ENCODE measurements at regions of chr4 and their contacts with region 1.

Region 1: DNA sequence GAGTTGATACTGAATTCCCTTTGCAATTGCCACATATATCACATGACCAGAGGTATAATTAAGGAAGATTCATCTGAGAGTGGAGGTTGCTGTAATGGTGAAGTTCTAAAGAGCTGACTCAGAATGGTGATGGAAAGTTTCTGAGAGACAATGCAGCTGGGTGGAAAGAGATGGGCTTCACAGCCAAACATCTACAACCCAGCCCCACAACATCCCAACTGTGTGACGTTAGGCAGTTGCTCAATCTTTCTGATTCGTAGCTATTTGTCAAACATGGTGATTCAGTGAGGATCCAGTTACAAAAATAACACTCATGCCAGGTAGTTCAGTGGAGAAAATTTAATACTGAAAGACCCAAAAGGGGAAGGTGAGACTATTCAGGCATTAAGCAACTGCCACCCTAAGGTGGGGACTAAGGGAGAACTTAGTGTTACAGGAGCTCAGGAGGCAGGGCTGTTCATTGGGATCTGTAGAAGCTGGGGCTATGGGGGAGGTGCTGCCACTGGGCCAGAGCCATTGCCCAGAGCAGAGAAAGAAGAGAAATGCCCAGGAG is 6.9 kb upstream of the AFF1 start:
- DNase-seq: no peak
- ATAC-seq: no peak
- H3K4me3 ChIP-seq: no peak overlapping the region
- H3K4me3 Mint-ChIP-seq: no peak overlapping the region
- H3K27ac ChIP-seq: no peak overlapping the region
- H3K27ac Mint-ChIP-seq: no peak overlapping the region
- H3K4me1 ChIP-seq: no peaks in the 10 kb centered on the region
- H3K4me1 Mint-ChIP-seq: peaks cover 0 to 11% (median 0%) of the 10 kb centered on the region in 3 donors
- H3K27me3 ChIP-seq: no peaks in the 10 kb centered on the region
- H3K27me3 Mint-ChIP-seq: no peaks in the 10 kb centered on the region

Region 2: GRCh38 chr4:86816501-86817273 is 111.2 kb before region 1 on chr4:
- CTCF ChIA-PET with region 1: no interaction called
- POLR2A ChIA-PET with region 1: no interaction called
- DNase-seq: no peak
- ATAC-seq: no peak
- H3K4me3 ChIP-seq: no peak overlapping the region
- H3K4me3 Mint-ChIP-seq: no peak overlapping the region
- H3K27ac ChIP-seq: no peak overlapping the region
- H3K27ac Mint-ChIP-seq: no peak overlapping the region
- H3K4me1 ChIP-seq: no peaks in the 10 kb centered on the region
- H3K4me1 Mint-ChIP-seq: no peaks in the 10 kb centered on the region
- H3K27me3 ChIP-seq: no peaks in the 10 kb centered on the region
- H3K27me3 Mint-ChIP-seq: no peaks in the 10 kb centered on the region

Region 3: DNA sequence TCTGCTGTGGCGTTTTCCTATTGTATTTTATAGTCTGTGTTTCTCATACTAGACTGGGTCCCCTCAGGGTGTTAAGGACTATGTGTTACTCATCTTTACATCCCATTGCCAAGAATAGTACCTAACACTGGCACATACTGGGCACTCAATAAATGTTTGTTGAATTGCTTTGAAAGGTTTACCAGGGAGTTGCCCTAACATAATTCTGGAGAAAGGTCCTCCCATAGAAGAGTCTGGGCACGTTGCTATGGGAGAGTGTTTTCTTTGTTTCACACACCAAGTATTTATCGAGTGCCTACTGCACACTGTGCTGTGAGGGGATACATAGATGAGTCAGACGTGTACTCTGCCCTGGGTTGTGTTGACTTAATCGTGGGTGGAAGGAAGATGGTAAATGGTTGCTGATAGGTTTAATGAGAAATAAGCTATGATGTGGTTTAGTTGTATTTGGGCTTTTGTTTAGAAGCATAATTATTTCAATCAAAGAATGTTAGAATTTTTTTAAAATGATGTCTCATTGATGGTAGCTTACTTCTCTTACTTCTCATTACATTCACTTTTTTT is 49.8 kb after region 1 on chr4:
- CTCF ChIA-PET with region 1: interaction called in 1 of 2 experiments, 10 read pairs
- POLR2A ChIA-PET with region 1: no interaction called
- DNase-seq: no peak
- ATAC-seq: peak in 3 of 4 experiments; percentile 31 to 67 (median 43)
- H3K4me3 ChIP-seq: no peak overlapping the region
- H3K4me3 Mint-ChIP-seq: no peak overlapping the region
- H3K27ac ChIP-seq: no peak overlapping the region
- H3K27ac Mint-ChIP-seq: peak overlapping the region; percentile 37 to 62
- H3K4me1 ChIP-seq: peaks cover 3 to 7% of the 10 kb centered on the region in 2 experiments
- H3K4me1 Mint-ChIP-seq: peaks cover 55 to 74% (median 73%) of the 10 kb centered on the region in 3 donors
- H3K27me3 ChIP-seq: no peaks in the 10 kb centered on the region
- H3K27me3 Mint-ChIP-seq: no peaks in the 10 kb centered on the region

Measured in T-cell (primary cell).